HEK293T (cell line): ENCODE measurements at regions of chr1 and their contacts with region 1.

Region 1: GRCh38 chr1:161738627-161739287 is 10.8 kb upstream of the DUSP12 start:
- DNase-seq: peak; percentile 44

Region 2: DNA sequence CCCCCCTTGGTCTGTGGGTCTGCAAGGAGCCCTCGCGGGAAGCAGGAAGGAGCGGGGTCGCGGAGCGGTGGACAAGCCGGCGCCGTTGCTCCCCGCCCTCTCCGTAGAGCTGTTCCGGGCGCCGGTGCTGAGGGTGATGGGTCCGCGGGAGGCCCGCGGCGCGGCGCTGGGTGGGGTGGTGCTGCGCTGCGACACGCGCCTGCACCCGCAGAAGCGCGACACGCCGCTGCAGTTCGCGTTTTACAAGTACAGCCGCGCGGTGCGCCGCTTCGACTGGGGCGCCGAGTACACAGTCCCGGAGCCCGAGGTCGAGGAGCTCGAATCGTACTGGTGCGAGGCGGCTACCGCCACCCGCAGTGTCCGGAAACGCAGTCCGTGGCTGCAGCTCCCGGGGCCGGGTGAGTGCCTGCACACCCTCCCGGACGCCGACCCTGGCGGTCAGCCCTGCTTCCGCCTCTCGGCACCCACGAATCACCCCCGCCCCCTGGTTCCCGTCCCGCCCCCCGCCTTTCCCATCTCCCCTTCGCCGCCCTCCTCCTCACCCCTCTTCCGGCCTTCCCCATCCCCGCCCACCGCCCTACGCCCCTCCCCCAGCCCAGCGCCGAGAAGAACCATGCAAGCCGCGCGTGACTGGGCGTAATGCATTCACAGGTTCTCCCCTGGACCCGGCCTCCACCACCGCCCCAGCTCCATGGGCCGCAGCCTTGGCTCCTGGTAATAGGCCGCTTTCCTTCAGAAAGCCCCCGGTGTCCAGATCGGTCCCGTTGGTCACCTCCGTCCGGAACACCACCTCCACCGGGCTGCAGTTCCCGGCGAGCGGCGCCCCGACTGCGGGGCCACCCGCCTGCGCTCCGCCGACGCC is 11.9 kb before region 1 on chr1:
- CTCF ChIA-PET with region 1: interaction called, 8 read pairs
- POLR2A ChIA-PET with region 1: interaction called, 11 read pairs
- DNase-seq: peak; percentile 85

Region 3: DNA sequence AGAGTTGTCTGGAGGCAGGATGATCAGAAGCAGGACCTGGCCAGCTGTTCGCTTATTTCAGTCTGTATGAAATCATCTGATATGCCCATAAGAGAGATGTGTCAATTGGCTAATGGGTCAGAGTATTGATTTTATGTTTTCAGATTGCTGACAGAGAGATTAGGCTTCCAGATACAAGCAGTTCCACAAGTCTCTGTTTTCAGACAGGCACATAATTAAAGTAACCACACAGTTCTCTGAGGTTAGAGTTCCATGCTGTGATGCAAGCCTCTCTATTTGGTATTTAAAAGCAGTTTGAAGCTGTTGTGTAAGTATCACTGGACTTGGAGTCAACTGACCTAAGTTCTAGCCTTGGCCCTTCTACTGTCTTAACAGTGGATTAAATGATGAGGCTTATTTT is 77.4 kb after region 1 on chr1:
- CTCF ChIA-PET with region 1: no interaction called
- POLR2A ChIA-PET with region 1: no interaction called
- DNase-seq: no peak